Ovary (tissue), 10 donors: ENCODE measurements at regions of chr19 and their contacts with region 1.

Region 1: DNA sequence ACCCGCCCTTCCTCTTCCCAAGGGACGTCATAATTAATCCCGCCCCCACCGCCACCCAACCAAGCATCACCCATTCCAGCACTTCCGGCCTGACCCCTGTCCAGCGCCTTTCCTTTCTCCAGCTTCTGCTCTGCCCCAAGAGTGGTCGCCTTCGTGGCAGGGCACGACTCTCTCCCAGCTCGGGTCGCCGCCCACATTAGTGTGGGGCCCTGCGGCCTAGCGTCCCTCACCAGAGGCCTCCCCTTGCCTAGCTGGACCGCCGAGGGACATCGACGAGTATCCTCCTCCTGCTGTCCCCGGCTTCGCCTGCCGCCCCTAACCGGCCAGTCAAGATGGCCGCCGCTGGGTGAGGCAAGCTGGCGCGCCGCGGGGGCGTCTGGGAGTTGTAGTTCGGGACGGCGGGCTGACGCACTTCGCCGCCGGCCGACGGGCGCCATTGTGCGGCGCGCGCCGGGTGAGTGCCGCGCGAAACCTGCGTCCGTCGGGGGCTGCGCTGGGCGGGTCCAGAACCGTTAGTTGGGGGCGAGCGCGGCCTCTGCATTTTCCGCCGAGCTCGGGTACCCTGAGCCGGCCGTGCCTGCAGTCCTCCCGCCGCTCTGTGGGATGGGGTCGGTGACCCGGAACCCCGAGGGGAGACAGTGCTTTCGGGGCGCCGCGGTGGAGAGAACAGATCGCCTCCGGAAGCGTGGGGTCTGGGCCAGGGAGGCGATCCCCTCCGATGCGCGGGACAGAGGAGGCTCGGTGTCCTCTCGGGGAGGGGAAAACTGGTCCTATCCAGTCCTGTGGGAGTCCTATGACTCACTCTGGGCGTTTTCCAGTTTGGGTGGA is at the start of gene ZNF274:
- DNase-seq: peak; percentile 95 to 96 (median 96)
- H3K4me3 ChIP-seq: peak within 1 kb of the TSS; percentile 72
- H3K27ac ChIP-seq: peak within 1 kb of the TSS; percentile 97 to 98
- H3K4me1 ChIP-seq: peaks cover 4% of the 10 kb centered on the region
- H3K27me3 ChIP-seq: no peaks in the 10 kb centered on the region
- CTCF ChIP-seq: peak in 1 of 3 donors; percentile 24
- EP300 ChIP-seq: no peak
- POLR2A ChIP-seq: peak; percentile 93
- total RNA-seq, gene ZNF274: 26.1 to 61.5 (median 45.3) TPM

Region 2: DNA sequence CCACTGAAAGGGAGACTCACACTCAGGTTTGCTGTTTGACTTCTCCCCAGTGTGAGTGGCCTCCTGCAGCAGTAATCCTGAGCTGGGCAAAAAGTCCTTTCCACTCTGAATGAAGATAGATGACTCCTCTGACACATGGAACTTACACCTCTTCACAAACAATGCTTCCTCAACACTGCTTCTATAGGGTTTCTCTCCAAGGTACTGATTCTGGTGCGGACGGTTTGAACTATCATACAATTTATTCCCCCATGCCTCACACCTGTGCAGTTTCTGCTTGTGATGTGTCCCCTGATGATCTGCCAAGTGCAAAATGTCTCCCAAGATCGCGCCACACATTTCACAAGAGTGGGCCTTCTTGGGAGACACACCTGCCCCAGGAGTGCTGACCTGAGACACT is 255.6 kb before region 1 on chr19:
- intact Hi-C with region 1: no loop called
- DNase-seq: no peak
- H3K4me3 ChIP-seq: no peak overlapping the region
- H3K27ac ChIP-seq: no peak overlapping the region
- H3K4me1 ChIP-seq: no peaks in the 10 kb centered on the region
- H3K27me3 ChIP-seq: no peaks in the 10 kb centered on the region
- CTCF ChIP-seq: no peak
- EP300 ChIP-seq: no peak
- POLR2A ChIP-seq: no peak

Region 3: DNA sequence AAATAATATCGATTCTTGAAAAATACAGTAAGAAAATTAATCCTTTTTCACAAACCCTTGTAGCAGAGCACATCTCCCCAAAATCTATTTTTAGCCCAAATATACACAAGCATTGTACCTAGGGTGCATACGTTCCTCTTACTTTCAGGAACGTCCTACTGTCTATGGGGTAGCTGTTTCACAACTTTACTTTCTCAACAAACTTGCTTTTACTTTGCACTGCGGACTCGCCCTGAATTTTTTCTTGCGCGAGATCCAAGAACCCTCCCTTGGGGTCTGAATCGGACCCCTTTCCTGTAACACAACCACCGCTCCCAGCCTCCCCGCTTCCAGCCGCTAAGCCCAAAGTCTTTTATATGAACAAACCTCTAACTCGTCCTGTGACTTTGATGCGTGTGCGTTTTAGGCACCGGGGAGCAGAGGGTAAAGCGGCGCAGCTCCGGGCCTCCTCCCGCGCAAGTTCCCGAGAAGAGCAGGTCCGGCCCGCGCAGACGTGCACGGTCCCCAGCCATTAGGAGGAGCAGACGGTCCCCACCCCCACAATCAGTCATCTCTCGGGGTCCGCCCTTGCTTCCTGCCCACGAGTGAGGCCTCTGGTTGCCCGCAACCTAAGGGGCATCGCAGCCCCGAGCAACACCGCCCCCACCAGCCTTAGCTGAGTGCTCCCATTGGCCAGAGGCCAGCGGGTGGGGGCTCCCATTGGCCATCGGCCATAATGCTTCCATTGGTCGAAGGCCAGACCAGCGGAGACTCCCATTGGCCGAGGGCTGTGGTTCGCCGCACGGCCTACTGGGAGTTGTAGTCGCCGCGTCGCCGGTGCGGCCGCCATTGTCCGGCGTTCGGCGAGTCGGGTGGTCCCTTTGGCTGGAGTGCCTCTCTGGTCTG is 95.2 kb after region 1 on chr19 and contains the start of gene ZNF8:
- intact Hi-C with region 1: loop called in 1 of 4 experiments (anchors 10 kb)
- DNase-seq: peak; percentile 96 to 99 (median 98)
- H3K4me3 ChIP-seq: peak within 1 kb of the TSS; percentile 76
- H3K27ac ChIP-seq: peak within 1 kb of the TSS; percentile 46 to 69
- H3K4me1 ChIP-seq: no peaks in the 10 kb centered on the region
- H3K27me3 ChIP-seq: no peaks in the 10 kb centered on the region
- CTCF ChIP-seq: peak in 1 of 3 donors; percentile 5
- EP300 ChIP-seq: no peak
- POLR2A ChIP-seq: peak; percentile 55
- total RNA-seq, gene ZNF8: 4.8 to 10.6 (median 8.0) TPM

Region 4: GRCh38 chr19:58380722-58381466 is 197.7 kb after region 1 on chr19 and contains the start of gene ZNF837:
- intact Hi-C with region 1: no loop called
- DNase-seq: peak; percentile 97 to 99 (median 98)
- H3K4me3 ChIP-seq: peak within 1 kb of the TSS; percentile 71
- H3K27ac ChIP-seq: peak within 1 kb of the TSS; percentile 28 to 95
- H3K4me1 ChIP-seq: peaks cover 16% of the 10 kb centered on the region
- H3K27me3 ChIP-seq: no peaks in the 10 kb centered on the region
- CTCF ChIP-seq: peak in 2 of 3 donors; percentile 39 to 52
- EP300 ChIP-seq: peak; percentile 22
- POLR2A ChIP-seq: peak; percentile 80
- total RNA-seq, gene ZNF837: 1.4 to 3.2 (median 2.7) TPM